ENCODE measurements at regions of chr12 and their contacts with region 1.

Region 1: DNA sequence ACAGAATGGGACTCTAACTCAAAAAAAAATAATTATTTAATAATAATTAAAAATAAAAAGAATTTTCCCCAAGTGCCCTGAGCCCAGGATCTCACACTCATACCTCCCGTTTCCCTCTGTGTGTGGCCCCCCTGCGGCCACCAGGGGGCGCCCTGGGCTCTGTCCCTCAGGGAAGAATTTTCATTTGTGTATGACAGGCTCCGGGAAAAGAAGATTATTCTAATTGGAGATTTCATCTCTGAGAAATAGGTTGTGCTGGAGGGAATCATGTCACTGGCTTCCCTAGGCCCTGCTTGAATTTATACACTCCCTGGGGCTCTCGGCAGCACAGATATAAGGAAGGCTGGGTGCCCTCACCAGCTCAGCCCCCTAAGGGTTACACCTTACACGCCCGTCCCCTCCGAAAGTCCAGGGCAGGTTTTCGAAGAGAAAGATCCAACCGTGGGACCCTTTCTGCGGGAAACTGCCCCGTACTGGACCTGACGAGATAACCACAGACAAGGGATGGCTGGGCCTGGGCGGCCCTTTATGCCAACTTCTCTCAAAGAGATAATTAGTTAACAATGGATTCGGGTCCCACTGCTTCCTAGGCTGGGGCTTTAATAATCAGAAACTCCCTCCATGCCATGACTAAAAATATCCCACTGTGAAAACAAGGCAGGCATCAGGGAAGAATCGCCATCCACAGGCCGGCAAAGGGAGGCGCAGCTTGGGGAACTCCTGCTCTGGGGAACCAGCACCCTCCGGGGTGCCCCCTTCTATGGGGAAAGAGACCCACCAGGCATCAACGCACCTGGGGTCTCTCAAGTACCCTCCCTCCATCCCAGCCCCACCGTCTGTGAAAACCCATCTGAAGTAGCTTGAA is 80.7 kb downstream of the KDM2B start:
- DNase-seq: peak; percentile 77
- ATAC-seq: peak; percentile 85
- H3K4me3 Mint-ChIP-seq: no peak overlapping the region
- H3K27ac Mint-ChIP-seq: no peak overlapping the region
- H3K4me1 Mint-ChIP-seq: peaks cover 33% of the 10 kb centered on the region
- H3K27me3 Mint-ChIP-seq: no peaks in the 10 kb centered on the region

Region 2: GRCh38 chr12:121279507-121279915 is 220.7 kb before region 1 on chr12:
- CTCF ChIA-PET with region 1: no interaction called
- POLR2A ChIA-PET with region 1: no interaction called
- DNase-seq: no peak
- ATAC-seq: no peak
- H3K4me3 Mint-ChIP-seq: no peak overlapping the region
- H3K27ac Mint-ChIP-seq: peak overlapping the region; percentile 34
- H3K4me1 Mint-ChIP-seq: peaks cover 4% of the 10 kb centered on the region
- H3K27me3 Mint-ChIP-seq: no peaks in the 10 kb centered on the region

Region 3: GRCh38 chr12:121530600-121531355 is 30.6 kb after region 1 on chr12:
- CTCF ChIA-PET with region 1: interaction called, 10 read pairs
- POLR2A ChIA-PET with region 1: no interaction called
- DNase-seq: peak; percentile 88
- ATAC-seq: peak; percentile 86
- H3K4me3 Mint-ChIP-seq: peak overlapping the region; percentile 42
- H3K27ac Mint-ChIP-seq: peak overlapping the region; percentile 85
- H3K4me1 Mint-ChIP-seq: peaks cover 55% of the 10 kb centered on the region
- H3K27me3 Mint-ChIP-seq: no peaks in the 10 kb centered on the region

Measured in activated CD8-positive, alpha-beta T cell treated with anti-CD3 and anti-CD28 coated beads, Interleukin-2, amount 10 ng/mL, durations not matched to agents 7 days and 5 days (primary cell).